ENCODE measurements at regions of chr9 and their contacts with region 1.

Region 1: DNA sequence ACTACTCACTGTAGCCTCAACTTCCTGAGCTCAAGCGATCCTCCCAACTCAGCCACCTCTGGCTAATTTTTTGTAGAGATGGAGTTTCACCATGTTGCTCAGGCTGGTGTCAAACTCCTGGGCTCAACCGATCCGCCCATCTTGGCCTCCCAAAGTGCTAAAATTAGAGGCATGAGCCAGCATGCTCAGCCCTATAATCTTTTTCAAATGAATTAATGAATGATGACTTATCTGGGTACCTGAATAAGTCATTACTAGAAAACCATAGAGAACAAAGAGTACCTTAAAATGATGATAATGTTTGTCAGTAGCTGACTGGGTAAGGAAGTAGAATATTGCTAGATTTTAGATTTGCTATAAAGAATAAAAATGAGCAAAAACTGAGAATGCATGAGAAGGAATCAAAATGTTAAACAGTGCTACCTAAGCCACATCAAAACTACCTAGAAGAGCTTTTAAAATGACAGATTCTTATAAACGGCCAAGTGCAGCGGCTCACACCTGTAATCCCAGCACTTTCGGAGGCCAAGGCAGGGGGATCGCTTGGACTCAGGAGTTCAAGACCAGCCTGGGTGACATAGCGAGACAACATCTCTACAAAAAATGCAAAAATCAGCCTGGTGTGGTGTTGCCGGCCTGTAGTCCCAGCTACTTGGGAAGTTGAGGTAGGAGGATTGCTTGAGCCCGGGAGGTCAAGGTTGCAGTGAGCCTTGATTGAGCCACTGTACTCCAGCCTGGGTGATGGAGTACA is 13.6 kb downstream of the FNBP1 start:
- DNase-seq: no peak
- H3K4me3 Mint-ChIP-seq: peak overlapping the region; percentile 28
- H3K27ac Mint-ChIP-seq: peak overlapping the region; percentile 92
- H3K4me1 Mint-ChIP-seq: peaks cover 87% of the 10 kb centered on the region
- H3K27me3 Mint-ChIP-seq: no peaks in the 10 kb centered on the region

Region 2: GRCh38 chr9:129988607-129989361 is 40.6 kb before region 1 on chr9:
- intact Hi-C with region 1: loop called (anchors 1 kb)
- DNase-seq: no peak
- H3K4me3 Mint-ChIP-seq: peak overlapping the region; percentile 8
- H3K27ac Mint-ChIP-seq: peak overlapping the region; percentile 88
- H3K4me1 Mint-ChIP-seq: peaks cover 55% of the 10 kb centered on the region
- H3K27me3 Mint-ChIP-seq: no peaks in the 10 kb centered on the region

Region 3: GRCh38 chr9:129999141-129999510 is 30.3 kb before region 1 on chr9:
- intact Hi-C with region 1: no loop called
- DNase-seq: no peak
- H3K4me3 Mint-ChIP-seq: peak overlapping the region; percentile 23
- H3K27ac Mint-ChIP-seq: peak overlapping the region; percentile 81
- H3K4me1 Mint-ChIP-seq: peaks cover 62% of the 10 kb centered on the region
- H3K27me3 Mint-ChIP-seq: no peaks in the 10 kb centered on the region

Region 4: GRCh38 chr9:130010151-130010988 is 19.0 kb before region 1 on chr9:
- intact Hi-C with region 1: loop called (anchors 1 kb)
- DNase-seq: peak; percentile 44
- H3K4me3 Mint-ChIP-seq: peak overlapping the region; percentile 48
- H3K27ac Mint-ChIP-seq: peak overlapping the region; percentile 97
- H3K4me1 Mint-ChIP-seq: peaks cover 72% of the 10 kb centered on the region
- H3K27me3 Mint-ChIP-seq: no peaks in the 10 kb centered on the region

Region 5: GRCh38 chr9:130015353-130016019 is 13.9 kb before region 1 on chr9:
- intact Hi-C with region 1: loop called (anchors 1 kb)
- DNase-seq: no peak
- H3K4me3 Mint-ChIP-seq: no peak overlapping the region
- H3K27ac Mint-ChIP-seq: no peak overlapping the region
- H3K4me1 Mint-ChIP-seq: peaks cover 65% of the 10 kb centered on the region
- H3K27me3 Mint-ChIP-seq: no peaks in the 10 kb centered on the region

Region 6: DNA sequence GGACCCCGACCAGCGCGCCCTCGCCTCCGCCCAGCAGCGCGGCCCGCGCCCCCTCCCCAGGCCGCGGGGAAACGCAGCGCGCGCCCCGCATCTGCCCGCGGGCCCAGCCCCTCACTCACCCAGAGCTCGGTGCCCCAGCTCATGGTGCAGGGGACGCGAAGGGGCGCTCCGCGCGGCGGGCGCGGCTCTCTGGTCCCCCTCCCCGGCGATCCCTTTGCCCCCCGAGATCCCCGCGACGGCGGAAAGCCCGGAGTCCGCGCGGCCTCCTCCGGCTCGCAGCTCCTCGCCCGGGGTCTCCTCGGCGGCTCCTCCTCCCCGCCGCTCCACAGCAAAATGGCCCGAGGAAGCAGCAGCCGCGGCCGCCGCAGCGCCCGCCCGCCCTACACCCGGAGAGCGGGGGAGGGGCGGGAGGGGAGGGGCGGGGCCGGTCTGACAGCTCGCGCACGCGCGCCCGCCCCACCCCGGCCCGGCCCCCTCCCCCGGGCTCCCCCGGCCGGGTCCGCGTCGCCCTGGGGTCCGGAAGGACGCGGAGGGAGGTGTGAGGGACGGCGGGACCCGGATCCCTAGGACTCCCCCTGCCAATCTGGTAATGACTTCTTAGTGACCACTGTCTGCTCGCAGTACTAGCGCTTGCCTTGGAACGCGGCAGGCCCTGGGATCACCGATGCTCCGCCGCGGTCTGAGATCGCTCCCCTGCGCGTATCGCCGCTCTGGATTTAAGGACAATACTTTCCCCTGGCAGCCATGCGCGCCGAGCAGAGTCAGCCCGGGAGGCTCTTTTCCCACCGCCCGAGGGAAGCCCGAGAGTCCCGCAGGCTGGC is 13.6 kb after region 1 on chr9 and contains the start of gene FNBP1:
- intact Hi-C with region 1: loop called (anchors 1 kb)
- DNase-seq: peak; percentile 78
- H3K4me3 Mint-ChIP-seq: peak within 1 kb of the TSS; percentile 97
- H3K27ac Mint-ChIP-seq: peak within 1 kb of the TSS; percentile 99
- H3K4me1 Mint-ChIP-seq: peaks cover 55% of the 10 kb centered on the region
- H3K27me3 Mint-ChIP-seq: no peaks in the 10 kb centered on the region
- total RNA-seq, gene FNBP1: 195 and 202 TPM in 2 replicates

Region 7: GRCh38 chr9:130128733-130129431 is 99.5 kb after region 1 on chr9:
- intact Hi-C with region 1: loop called (anchors 5 kb)
- DNase-seq: peak; percentile 29
- H3K4me3 Mint-ChIP-seq: peak overlapping the region; percentile 80
- H3K27ac Mint-ChIP-seq: peak overlapping the region; percentile 95
- H3K4me1 Mint-ChIP-seq: peaks cover 46% of the 10 kb centered on the region
- H3K27me3 Mint-ChIP-seq: no peaks in the 10 kb centered on the region